Activated T-helper 1 cell treated with anti-CD3 and anti-CD28 coated beads, Interleukin-12 subunit alpha, Interleukin-12 subunit beta, Interleukin-2, Interleukin-4 antibody, amounts not matched to agents 30 ng/mL and 10 ng/mL and 1 ng/mL, durations not matched to agents 14 hours and 24 hours and 36 hours (primary cell): ENCODE measurements at regions of chr12 and their contacts with region 1.

Region 1: DNA sequence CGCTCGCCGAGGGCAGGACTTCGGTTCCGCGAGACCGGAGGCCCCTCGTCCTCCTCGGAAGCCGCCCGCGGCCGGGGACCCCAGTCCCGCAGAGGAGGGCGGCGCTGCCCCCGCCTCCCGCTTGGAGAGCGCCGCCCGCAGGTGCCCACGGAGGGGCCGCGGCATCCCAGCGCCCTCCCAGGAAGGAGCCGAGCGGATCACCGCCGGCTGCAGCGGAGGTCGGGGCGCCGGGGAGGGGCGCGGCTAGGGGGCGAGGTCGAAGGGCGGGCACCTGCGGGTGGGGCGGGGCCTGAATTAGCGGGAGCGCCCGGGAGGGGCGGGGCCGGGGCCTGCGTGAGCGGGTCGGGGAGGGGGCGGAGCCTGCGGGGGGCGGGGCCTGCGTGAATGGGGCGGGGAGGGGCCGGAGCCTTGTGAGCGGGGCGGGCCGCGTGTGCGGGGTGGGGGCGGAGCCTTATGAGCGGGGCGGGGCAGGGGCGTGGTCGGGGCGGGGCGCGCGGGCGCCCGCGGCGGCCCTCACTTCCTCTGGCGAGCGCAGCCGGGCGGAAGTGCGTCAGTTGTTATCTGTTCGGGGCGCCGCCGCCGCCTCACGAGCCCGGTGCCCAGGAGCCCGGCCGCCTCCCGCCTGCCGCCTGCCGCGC is at the start of gene FBRSL1:
- DNase-seq: peak; percentile 86
- H3K4me3 Mint-ChIP-seq: peak within 1 kb of the TSS; percentile 87
- H3K27ac Mint-ChIP-seq: peak within 1 kb of the TSS; percentile 90
- H3K4me1 Mint-ChIP-seq: peaks cover 45% of the 10 kb centered on the region
- H3K27me3 Mint-ChIP-seq: peaks cover 1% of the 10 kb centered on the region
- total RNA-seq, gene FBRSL1: 75.8 and 80.2 TPM in 2 replicates

Region 2: GRCh38 chr12:132144115-132144812 is 345.5 kb before region 1 on chr12 and contains the starts of genes DDX51 and NOC4L:
- intact Hi-C with region 1: loop called (anchors 1 kb)
- DNase-seq: peak; percentile 96
- H3K4me3 Mint-ChIP-seq: peak within 1 kb of the TSS; percentile 90
- H3K27ac Mint-ChIP-seq: peak within 1 kb of the TSS; percentile 95
- H3K4me1 Mint-ChIP-seq: peaks cover 12% of the 10 kb centered on the region
- H3K27me3 Mint-ChIP-seq: peaks cover 2% of the 10 kb centered on the region
- total RNA-seq, gene DDX51: 48.8 and 55.0 TPM in 2 replicates
- total RNA-seq, gene NOC4L: 49.5 and 51.3 TPM in 2 replicates

Region 3: DNA sequence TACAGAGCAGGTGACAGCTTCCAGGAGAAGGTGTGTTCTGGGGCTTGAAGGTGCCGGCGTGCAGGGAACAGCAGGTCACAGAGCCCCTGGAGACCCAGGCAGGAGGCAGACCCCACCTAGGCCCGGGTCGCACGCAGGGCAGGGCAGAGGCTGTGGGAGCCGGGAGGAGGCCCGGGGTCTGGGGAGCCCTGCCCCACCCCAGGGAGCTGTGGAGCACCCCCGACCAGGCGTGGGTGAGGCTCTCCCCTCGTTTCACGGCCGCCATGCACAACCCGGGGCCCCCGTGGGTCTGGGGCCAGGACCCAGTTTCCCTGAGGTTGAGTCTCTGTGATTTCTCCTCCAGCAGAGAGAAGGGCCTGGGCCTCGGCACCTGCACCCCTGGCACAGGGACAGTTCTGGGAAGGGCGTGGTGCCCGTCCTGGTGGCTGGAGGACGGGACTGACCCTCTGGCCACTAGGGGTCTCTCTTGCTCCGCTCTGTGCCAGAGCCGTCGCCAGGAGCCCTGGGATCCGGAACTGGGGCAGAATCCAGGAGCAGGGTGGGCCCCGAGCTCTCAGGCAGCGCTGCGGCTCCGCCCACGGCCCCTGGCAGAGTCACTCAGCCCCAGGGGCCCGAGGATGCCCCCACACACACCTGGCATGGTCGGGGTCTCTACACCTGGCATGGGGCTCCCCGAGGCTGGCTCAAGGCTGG is 74.9 kb before region 1 on chr12:
- intact Hi-C with region 1: no loop called
- DNase-seq: peak; percentile 64
- H3K4me3 Mint-ChIP-seq: no peak overlapping the region
- H3K27ac Mint-ChIP-seq: no peak overlapping the region
- H3K4me1 Mint-ChIP-seq: no peaks in the 10 kb centered on the region
- H3K27me3 Mint-ChIP-seq: peaks cover 2% of the 10 kb centered on the region

Region 4: GRCh38 chr12:132445884-132446632 is 43.7 kb before region 1 on chr12:
- intact Hi-C with region 1: loop called (anchors 1 kb)
- DNase-seq: peak; percentile 62
- H3K4me3 Mint-ChIP-seq: peak overlapping the region; percentile 93
- H3K27ac Mint-ChIP-seq: peak overlapping the region; percentile 97
- H3K4me1 Mint-ChIP-seq: peaks cover 37% of the 10 kb centered on the region
- H3K27me3 Mint-ChIP-seq: peaks cover 3% of the 10 kb centered on the region

Region 5: GRCh38 chr12:132506328-132507160 is 16.8 kb after region 1 on chr12:
- intact Hi-C with region 1: loop called (anchors 1 kb)
- DNase-seq: peak; percentile 60
- H3K4me3 Mint-ChIP-seq: no peak overlapping the region
- H3K27ac Mint-ChIP-seq: peak overlapping the region; percentile 29
- H3K4me1 Mint-ChIP-seq: peaks cover 14% of the 10 kb centered on the region
- H3K27me3 Mint-ChIP-seq: no peaks in the 10 kb centered on the region

Region 6: DNA sequence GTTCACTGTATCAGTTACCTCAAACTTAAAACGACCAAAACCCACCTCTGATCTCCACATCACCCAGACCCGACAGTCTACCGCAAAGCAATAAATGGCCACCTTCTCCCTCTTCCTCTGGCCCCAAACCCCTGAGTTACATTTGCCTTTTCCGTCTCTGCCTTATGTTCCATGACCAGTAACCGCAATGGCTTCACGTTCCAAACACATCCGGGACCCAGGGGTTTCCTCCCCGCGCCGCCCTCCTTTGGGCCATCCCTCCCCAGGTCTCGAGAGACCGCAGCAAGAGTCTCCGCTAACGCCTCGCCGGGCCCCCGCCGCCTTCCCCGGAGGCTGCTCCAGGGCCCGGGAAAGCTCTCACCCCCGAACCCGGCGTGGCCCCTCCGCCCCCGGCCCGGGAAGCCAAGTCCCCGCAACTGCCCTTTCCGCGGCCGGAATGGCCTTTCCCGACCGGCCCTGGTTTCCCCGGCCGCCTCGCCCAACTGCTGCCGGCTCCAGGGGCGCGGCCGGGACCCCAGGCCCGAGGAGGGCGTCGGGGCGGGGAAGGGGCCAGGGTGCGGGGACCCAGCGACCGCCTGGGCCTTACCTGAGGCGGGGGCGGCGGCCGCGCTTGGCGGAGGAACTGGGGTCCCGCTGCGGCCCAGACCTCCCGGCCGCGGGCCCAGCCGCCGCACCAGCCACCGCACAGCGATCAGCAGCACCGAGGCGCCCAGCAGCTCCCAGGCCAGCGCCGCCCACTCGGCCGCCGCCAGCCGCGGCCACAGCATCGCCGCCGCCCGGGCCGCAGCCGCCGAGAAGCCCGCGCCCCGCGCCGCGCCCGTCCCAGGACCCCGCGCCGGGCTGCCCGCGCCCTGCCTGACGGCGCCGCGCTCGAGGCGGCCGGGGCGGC is 271.6 kb after region 1 on chr12 and contains the start of gene ANKLE2:
- intact Hi-C with region 1: loop called (anchors 5 kb)
- DNase-seq: peak; percentile 74
- H3K4me3 Mint-ChIP-seq: peak within 1 kb of the TSS; percentile 93
- H3K27ac Mint-ChIP-seq: peak within 1 kb of the TSS; percentile 96
- H3K4me1 Mint-ChIP-seq: peaks cover 24% of the 10 kb centered on the region
- H3K27me3 Mint-ChIP-seq: no peaks in the 10 kb centered on the region
- total RNA-seq, gene ANKLE2: 151 and 156 TPM in 2 replicates